Naive thymus-derived CD4-positive, alpha-beta T cell (primary cell): ENCODE measurements at regions of chrX and their contacts with region 1.

Region 1: DNA sequence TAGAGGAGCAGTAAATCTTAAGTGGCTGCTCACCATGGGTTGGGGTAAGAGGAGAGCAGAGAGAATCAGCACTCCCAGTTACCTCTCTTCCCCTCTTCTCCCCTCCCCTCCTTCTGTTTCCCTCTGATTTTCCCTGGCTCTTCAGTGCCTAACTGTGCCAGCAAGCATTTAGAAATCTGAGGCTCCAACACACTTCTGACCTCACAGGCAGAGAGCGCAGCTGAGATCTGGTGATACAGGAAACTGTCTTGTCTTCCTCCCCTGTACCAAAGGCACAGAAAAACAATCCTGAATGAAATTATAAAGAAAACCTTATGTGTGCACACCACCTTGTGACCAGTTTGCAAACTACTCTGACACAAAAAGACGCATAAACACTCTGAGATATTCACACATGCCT is 82.4 kb upstream of the SMIM10 start:
- DNase-seq: peak in 7 of 9 donors; percentile 20 to 62 (median 47)
- ATAC-seq: peak; percentile 85
- H3K4me3 ChIP-seq: no peak overlapping the region
- H3K4me3 Mint-ChIP-seq: no peak overlapping the region
- H3K27ac ChIP-seq: no peak overlapping the region
- H3K27ac Mint-ChIP-seq: peak overlapping the region; percentile 50 to 91 (median 80)
- H3K4me1 ChIP-seq: no peaks in the 10 kb centered on the region
- H3K4me1 Mint-ChIP-seq: peaks cover 5 to 13% (median 9%) of the 10 kb centered on the region in 7 donors
- H3K27me3 ChIP-seq: no peaks in the 10 kb centered on the region
- H3K27me3 Mint-ChIP-seq: no peaks in the 10 kb centered on the region

Region 2: GRCh38 chrX:134388161-134389109 is 519.9 kb before region 1 on chrX:
- CTCF ChIA-PET with region 1: no interaction called
- POLR2A ChIA-PET with region 1: no interaction called
- intact Hi-C with region 1: no loop called
- DNase-seq: no peak
- ATAC-seq: peak; percentile 71
- H3K4me3 ChIP-seq: no peak overlapping the region
- H3K4me3 Mint-ChIP-seq: no peak overlapping the region
- H3K27ac ChIP-seq: no peak overlapping the region
- H3K27ac Mint-ChIP-seq: no peak overlapping the region
- H3K4me1 ChIP-seq: no peaks in the 10 kb centered on the region
- H3K4me1 Mint-ChIP-seq: peaks cover 0 to 11% (median 6%) of the 10 kb centered on the region in 7 donors
- H3K27me3 ChIP-seq: no peaks in the 10 kb centered on the region
- H3K27me3 Mint-ChIP-seq: no peaks in the 10 kb centered on the region

Region 3: GRCh38 chrX:134460005-134460861 is 448.1 kb before region 1 on chrX and contains the start of gene HPRT1:
- CTCF ChIA-PET with region 1: no interaction called
- POLR2A ChIA-PET with region 1: no interaction called
- intact Hi-C with region 1: loop called in 1 of 2 experiments (anchors 2 kb)
- DNase-seq: peak; percentile 57 to 80 (median 72)
- ATAC-seq: peak; percentile 99
- H3K4me3 ChIP-seq: peak within 1 kb of the TSS; percentile 53
- H3K4me3 Mint-ChIP-seq: peak within 1 kb of the TSS; percentile 78 to 97 (median 91)
- H3K27ac ChIP-seq: peak within 1 kb of the TSS; percentile 80
- H3K27ac Mint-ChIP-seq: peak within 1 kb of the TSS in 8 of 9 donors; percentile 14 to 95 (median 84)
- H3K4me1 ChIP-seq: no peaks in the 10 kb centered on the region
- H3K4me1 Mint-ChIP-seq: peaks cover 0 to 20% (median 10%) of the 10 kb centered on the region in 7 donors
- H3K27me3 ChIP-seq: no peaks in the 10 kb centered on the region
- H3K27me3 Mint-ChIP-seq: no peaks in the 10 kb centered on the region
- total RNA-seq, gene HPRT1: 13.6 to 73.7 (median 14.9) TPM

Region 4: GRCh38 chrX:134520860-134521390 is 387.4 kb before region 1 on chrX:
- CTCF ChIA-PET with region 1: no interaction called
- POLR2A ChIA-PET with region 1: no interaction called
- intact Hi-C with region 1: loop called in 1 of 2 experiments (anchors 1 kb)
- DNase-seq: peak in 1 of 9 donors; percentile 2
- ATAC-seq: no peak
- H3K4me3 ChIP-seq: no peak overlapping the region
- H3K4me3 Mint-ChIP-seq: no peak overlapping the region
- H3K27ac ChIP-seq: no peak overlapping the region
- H3K27ac Mint-ChIP-seq: no peak overlapping the region
- H3K4me1 ChIP-seq: no peaks in the 10 kb centered on the region
- H3K4me1 Mint-ChIP-seq: peaks cover 0 to 8% (median 3%) of the 10 kb centered on the region in 7 donors
- H3K27me3 ChIP-seq: no peaks in the 10 kb centered on the region
- H3K27me3 Mint-ChIP-seq: no peaks in the 10 kb centered on the region

Region 5: DNA sequence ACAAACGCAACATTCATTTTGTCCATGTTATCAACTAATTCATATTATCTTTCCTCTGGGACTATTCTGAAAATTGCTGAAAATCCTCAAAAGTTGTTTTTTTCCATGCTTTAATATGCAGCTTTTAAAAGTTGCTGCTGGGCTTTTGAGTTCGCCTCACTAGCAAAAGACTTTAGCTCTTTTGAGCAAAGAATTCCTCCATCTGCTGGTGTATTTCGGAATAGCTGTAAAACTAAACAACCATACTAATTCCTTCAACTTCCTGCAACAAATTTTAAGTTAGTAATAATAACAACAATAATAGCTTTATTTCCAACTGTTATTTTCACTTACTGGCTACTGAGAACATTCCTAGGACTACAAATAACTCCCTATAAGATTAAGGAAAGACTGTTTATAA is 125.6 kb before region 1 on chrX:
- CTCF ChIA-PET with region 1: no interaction called
- POLR2A ChIA-PET with region 1: no interaction called
- intact Hi-C with region 1: loop called in 1 of 2 experiments (anchors 1 kb)
- DNase-seq: peak in 3 of 9 donors; percentile 3 to 25 (median 15)
- ATAC-seq: no peak
- H3K4me3 ChIP-seq: no peak overlapping the region
- H3K4me3 Mint-ChIP-seq: no peak overlapping the region
- H3K27ac ChIP-seq: no peak overlapping the region
- H3K27ac Mint-ChIP-seq: no peak overlapping the region
- H3K4me1 ChIP-seq: no peaks in the 10 kb centered on the region
- H3K4me1 Mint-ChIP-seq: no peaks in the 10 kb centered on the region
- H3K27me3 ChIP-seq: no peaks in the 10 kb centered on the region
- H3K27me3 Mint-ChIP-seq: no peaks in the 10 kb centered on the region

Region 6: DNA sequence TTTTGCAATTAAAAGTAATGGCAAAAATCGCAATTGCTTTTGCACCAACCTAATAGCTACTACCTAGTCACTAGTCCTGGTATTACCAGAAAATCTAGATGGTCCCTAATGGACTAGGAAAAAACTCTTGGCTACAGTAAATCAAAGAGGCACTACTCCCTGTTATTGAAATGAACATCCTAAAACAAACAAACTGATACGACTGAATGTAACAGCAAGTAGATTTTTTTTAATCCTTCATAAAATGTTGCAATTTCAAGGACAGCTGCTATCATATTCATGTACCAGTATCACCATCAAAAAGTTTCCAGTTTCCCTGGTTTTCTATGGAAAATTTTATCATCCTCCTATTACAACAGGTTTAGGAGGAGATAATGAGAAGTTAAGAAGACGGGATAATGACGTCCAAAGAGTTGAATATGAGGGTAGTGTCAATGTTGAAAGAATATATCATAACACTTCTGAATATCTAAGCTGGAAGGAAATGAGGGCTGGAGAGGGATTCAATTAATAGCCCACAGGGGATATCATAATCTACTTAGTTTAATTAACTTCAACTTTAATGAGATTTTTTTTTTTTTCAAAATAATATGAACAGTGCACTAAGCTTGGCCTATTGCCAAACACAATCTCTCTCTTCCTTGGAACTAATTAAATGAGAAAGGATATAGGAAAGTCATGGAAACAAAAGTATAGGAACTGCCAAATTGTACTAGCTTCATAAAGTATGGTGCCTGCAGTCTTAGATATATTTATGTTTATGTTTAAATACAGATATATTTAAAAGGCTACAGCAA is 12.4 kb before region 1 on chrX:
- CTCF ChIA-PET with region 1: no interaction called
- POLR2A ChIA-PET with region 1: no interaction called
- intact Hi-C with region 1: no loop called
- DNase-seq: no peak
- ATAC-seq: no peak
- H3K4me3 ChIP-seq: no peak overlapping the region
- H3K4me3 Mint-ChIP-seq: no peak overlapping the region
- H3K27ac ChIP-seq: no peak overlapping the region
- H3K27ac Mint-ChIP-seq: no peak overlapping the region
- H3K4me1 ChIP-seq: no peaks in the 10 kb centered on the region
- H3K4me1 Mint-ChIP-seq: no peaks in the 10 kb centered on the region
- H3K27me3 ChIP-seq: no peaks in the 10 kb centered on the region
- H3K27me3 Mint-ChIP-seq: no peaks in the 10 kb centered on the region

Region 7: GRCh38 chrX:134936542-134936941 is 28.2 kb after region 1 on chrX:
- CTCF ChIA-PET with region 1: no interaction called
- POLR2A ChIA-PET with region 1: no interaction called
- intact Hi-C with region 1: no loop called
- DNase-seq: no peak
- ATAC-seq: no peak
- H3K4me3 ChIP-seq: no peak overlapping the region
- H3K4me3 Mint-ChIP-seq: no peak overlapping the region
- H3K27ac ChIP-seq: no peak overlapping the region
- H3K27ac Mint-ChIP-seq: no peak overlapping the region
- H3K4me1 ChIP-seq: no peaks in the 10 kb centered on the region
- H3K4me1 Mint-ChIP-seq: no peaks in the 10 kb centered on the region
- H3K27me3 ChIP-seq: no peaks in the 10 kb centered on the region
- H3K27me3 Mint-ChIP-seq: peaks cover 0 to 6% (median 0%) of the 10 kb centered on the region in 5 donors

Region 8: GRCh38 chrX:134948333-134949241 is 40.2 kb after region 1 on chrX:
- CTCF ChIA-PET with region 1: no interaction called
- POLR2A ChIA-PET with region 1: no interaction called
- intact Hi-C with region 1: no loop called
- DNase-seq: no peak
- ATAC-seq: no peak
- H3K4me3 ChIP-seq: no peak overlapping the region
- H3K4me3 Mint-ChIP-seq: no peak overlapping the region
- H3K27ac ChIP-seq: no peak overlapping the region
- H3K27ac Mint-ChIP-seq: no peak overlapping the region
- H3K4me1 ChIP-seq: no peaks in the 10 kb centered on the region
- H3K4me1 Mint-ChIP-seq: no peaks in the 10 kb centered on the region
- H3K27me3 ChIP-seq: no peaks in the 10 kb centered on the region
- H3K27me3 Mint-ChIP-seq: no peaks in the 10 kb centered on the region